Lower leg skin (tissue), 4 donors: ENCODE measurements at regions of chr12 and their contacts with region 1.

Region 1: DNA sequence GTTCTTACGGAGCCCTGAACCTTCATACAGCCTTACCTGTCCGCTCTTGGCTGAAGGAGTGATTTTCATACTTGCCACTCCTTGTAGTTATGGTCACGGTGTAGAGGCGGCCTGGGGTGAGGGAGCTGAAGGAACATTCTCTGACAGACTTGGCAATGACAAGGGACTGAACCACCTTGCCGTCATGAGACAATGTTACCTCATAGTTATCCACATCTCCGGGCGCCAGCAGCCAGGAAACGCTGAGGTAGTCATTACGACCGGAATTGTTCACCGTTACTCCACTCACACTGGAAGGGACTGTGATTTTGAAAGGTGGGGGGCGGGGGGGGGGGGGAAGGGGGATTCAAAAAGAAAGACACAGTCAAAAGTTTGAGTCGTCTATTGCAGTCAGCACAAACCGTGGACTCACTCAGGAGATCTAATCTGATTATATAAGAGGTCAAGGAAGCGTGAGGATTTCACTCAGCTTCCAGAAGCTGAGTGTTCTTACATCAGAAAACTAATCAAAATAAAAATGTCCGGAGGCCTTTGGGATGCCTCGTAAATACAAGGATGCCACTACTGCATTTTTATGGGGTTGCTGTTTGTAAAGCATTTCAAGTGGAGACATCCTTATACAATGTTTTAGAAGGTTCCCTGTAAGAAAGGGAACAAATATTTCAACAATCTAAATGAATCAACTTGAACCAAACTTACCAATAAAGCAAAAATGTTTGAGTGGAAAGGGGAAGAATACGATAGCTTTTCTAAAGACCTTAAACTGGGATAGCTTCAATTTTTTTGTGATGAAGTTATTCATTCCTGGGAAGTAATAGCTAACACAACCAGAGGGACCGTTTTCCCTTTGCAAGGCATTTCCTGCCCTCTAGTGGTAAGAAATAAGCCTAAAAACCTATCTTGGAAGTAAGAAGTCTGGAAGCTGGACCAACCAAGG is 60.6 kb downstream of the PTPRB start:
- DNase-seq: no peak
- H3K4me3 ChIP-seq: no peak overlapping the region
- CTCF ChIP-seq: no peak
- POLR2A ChIP-seq: no peak

Region 2: DNA sequence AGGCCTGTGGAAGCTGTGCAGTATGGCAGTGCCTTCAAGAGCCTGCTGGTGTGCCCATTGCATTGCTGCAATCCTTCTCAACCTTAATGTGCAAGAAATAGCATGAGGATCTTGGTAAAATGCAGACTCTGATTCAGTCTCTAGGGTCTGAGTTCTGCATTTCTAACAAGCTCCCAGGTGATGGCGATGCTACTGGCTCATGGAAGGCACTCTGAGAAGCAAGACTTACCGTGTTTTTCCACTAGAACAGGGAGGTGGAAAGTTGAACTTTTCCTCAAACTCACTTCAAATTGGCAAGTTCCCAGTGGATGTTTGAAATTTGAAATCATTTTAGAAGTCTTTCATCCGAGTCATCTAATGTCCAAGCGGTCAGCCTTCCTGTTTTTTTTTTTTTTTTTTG is 696.0 kb before region 1 on chr12:
- intact Hi-C with region 1: loop called (anchors 5 kb)
- DNase-seq: no peak
- H3K4me3 ChIP-seq: no peak overlapping the region
- CTCF ChIP-seq: no peak
- POLR2A ChIP-seq: no peak

Region 3: DNA sequence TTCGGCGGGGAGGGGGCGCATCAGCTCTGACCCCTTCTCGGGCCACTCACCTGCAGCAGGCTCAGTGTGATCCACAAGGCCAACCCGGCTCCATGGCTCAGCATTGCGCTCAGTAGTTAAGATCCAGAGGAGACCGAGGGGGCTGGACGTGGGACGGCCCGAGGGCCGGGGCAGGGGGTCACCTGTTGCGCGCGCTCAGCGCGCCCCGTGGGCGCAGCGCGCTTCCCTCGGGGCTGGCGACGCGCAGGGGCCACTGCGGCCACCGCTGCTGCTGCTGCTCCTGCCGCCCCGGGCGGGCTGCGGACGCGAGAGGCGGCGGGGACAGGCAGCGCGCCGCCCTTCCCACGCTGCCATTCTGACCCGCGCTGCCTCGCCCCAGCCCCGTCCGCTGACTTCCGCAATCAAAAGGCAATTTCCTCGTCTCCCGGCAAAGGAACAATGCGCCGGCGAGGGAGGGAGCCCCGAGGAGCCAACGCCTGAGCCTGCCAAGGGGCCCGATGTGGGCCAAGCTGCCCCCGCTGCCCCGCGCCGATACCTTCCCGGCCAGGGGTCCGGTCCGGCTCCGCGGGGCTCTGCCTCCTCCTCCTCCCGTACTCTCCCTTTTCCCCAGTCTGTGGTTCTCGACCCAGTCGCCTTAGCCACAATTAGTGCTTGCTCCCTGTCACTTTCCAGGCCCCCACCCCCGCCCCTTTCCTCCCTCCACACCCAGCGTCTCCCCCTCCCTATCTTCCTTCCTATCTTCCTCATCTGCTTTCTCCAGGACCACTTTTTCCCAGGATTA is 33.3 kb after region 1 on chr12:
- intact Hi-C with region 1: no loop called
- DNase-seq: peak; percentile 20 to 89
- H3K4me3 ChIP-seq: peak overlapping the region; percentile 44
- CTCF ChIP-seq: no peak
- POLR2A ChIP-seq: no peak